ENCODE measurements at regions of chr1 and their contacts with region 1.

Region 1: DNA sequence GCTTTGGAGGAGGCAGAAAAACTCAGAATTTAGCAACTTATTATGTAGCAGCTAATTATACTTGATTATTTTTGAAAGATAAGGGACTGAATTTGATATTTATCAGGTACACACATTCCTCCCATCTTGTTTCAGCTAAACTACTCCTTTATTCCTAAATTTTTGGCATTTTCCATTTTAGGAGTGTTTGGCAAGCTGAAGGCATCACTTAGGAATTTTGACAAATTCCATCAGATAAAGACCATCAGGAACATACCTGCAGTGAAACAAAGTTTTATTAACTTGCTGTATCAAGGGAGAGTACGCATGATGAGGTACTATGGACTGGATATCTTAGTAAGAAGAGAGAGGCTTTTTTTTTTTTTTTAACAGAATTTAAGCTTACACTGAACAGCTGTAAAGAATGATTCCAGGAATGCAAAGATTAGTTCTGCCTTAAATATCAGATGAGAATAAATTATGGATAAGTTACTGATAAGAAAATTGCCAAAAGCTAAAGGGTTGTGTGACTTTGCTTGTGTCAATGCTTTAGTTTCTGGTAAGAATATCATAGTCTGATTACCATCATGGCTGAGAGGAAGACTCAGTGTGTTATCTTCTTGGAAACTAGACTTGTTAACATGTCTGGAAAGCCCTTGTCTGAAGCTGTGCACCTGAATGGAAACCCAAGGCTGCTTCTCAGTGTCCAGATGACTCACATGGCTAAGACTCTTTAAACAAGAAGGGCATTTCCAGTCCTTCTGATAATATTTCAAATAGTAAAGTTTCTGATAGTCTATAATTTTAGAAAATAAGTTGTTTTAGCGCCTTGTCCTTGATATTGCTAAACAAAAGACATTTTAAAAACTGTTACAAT is 1092.5 kb downstream of the PLA2G4A start:
- DNase-seq: no peak
- H3K4me3 ChIP-seq: no peak overlapping the region
- CTCF ChIP-seq: no peak
- POLR2A ChIP-seq: no peak

Region 2: DNA sequence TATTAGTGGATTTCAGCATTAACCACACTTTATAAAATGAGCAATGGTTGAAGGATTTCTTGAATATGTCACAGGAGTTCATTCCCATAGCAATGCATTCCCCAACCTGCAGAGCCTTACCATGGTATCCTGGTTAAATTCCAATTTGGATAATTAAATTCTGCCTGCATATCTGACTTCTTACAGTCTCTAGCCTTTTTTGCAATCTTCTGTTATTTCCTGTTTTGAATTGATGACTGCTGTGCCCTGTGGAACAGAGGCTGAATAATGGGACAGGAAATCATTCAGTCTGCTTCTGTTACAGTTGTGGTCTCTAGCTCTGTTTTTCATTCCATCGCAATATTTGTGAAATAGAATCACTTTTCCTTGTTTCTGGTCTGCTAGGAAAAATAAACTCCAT is 731.5 kb after region 1 on chr1:
- intact Hi-C with region 1: loop called (anchors 5 kb)
- DNase-seq: no peak
- H3K4me3 ChIP-seq: no peak overlapping the region
- CTCF ChIP-seq: no peak
- POLR2A ChIP-seq: no peak